Sigmoid colon (tissue), 7 donors: ENCODE measurements at regions of chr3 and their contacts with region 1.

Region 1: GRCh38 chr3:71069797-71070196 is 513.7 kb downstream of the FOXP1 start:
- DNase-seq: peak; percentile 76
- H3K4me3 ChIP-seq: no peak overlapping the region
- H3K27ac ChIP-seq: peak overlapping the region; percentile 92 to 99 (median 98)
- H3K4me1 ChIP-seq: peaks cover 0 to 93% (median 84%) of the 10 kb centered on the region in 4 donors
- H3K27me3 ChIP-seq: no peaks in the 10 kb centered on the region
- CTCF ChIP-seq: peak in 2 of 4 experiments; percentile 37 to 39
- EP300 ChIP-seq: no peak
- POLR2A ChIP-seq: no peak

Region 2: GRCh38 chr3:70684701-70685100 is 385.1 kb before region 1 on chr3:
- intact Hi-C with region 1: no loop called
- DNase-seq: no peak
- H3K4me3 ChIP-seq: no peak overlapping the region
- H3K27ac ChIP-seq: no peak overlapping the region
- H3K4me1 ChIP-seq: no peaks in the 10 kb centered on the region
- H3K27me3 ChIP-seq: no peaks in the 10 kb centered on the region
- CTCF ChIP-seq: no peak
- EP300 ChIP-seq: no peak
- POLR2A ChIP-seq: no peak

Region 3: GRCh38 chr3:70899816-70900215 is 170.0 kb before region 1 on chr3:
- intact Hi-C with region 1: no loop called
- DNase-seq: no peak
- H3K4me3 ChIP-seq: no peak overlapping the region
- H3K27ac ChIP-seq: no peak overlapping the region
- H3K4me1 ChIP-seq: no peaks in the 10 kb centered on the region
- H3K27me3 ChIP-seq: no peaks in the 10 kb centered on the region
- CTCF ChIP-seq: no peak
- EP300 ChIP-seq: no peak
- POLR2A ChIP-seq: no peak

Region 4: GRCh38 chr3:71006810-71007785 is 62.7 kb before region 1 on chr3:
- intact Hi-C with region 1: loop called (anchors 5 kb)
- DNase-seq: no peak
- H3K4me3 ChIP-seq: no peak overlapping the region
- H3K27ac ChIP-seq: peak overlapping the region; percentile 64 to 72 (median 70)
- H3K4me1 ChIP-seq: peaks cover 0 to 91% (median 69%) of the 10 kb centered on the region in 4 donors
- H3K27me3 ChIP-seq: no peaks in the 10 kb centered on the region
- CTCF ChIP-seq: peak in 2 of 4 experiments; percentile 30
- EP300 ChIP-seq: no peak
- POLR2A ChIP-seq: no peak

Region 5: GRCh38 chr3:71109241-71109976 is 39.6 kb after region 1 on chr3:
- intact Hi-C with region 1: loop called (anchors 5 kb)
- DNase-seq: no peak
- H3K4me3 ChIP-seq: no peak overlapping the region
- H3K27ac ChIP-seq: peak overlapping the region; percentile 70 to 86 (median 81)
- H3K4me1 ChIP-seq: peaks cover 0 to 93% (median 74%) of the 10 kb centered on the region in 4 donors
- H3K27me3 ChIP-seq: no peaks in the 10 kb centered on the region
- CTCF ChIP-seq: no peak
- EP300 ChIP-seq: no peak
- POLR2A ChIP-seq: no peak